ENCODE measurements at regions of chr2 and their contacts with region 1.

Region 1: DNA sequence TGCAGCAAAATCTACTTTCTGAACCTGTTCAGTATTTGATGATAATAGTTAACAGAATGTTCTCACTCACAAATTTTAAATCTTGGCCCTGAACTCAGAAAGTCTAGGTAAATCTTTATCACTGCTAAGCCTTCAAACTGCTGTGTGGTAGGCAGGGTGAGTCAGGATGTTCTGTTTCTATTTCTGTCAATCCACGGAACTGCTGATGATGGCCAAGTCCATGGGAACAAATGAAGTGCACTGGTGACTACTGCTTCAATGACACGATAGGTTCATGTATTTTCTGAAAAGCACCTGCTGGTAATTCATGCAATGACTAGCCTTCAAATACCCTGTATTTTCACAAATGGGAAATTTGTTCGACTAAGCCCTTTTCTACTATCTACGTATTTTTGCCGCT is 14.2 kb downstream of the NIFK start:
- DNase-seq: no peak
- ATAC-seq: peak in 5 of 8 donors; percentile 47 to 85 (median 72)
- H3K4me3 ChIP-seq: no peak overlapping the region
- H3K27ac ChIP-seq: no peak overlapping the region
- H3K4me1 ChIP-seq: peaks cover 0 to 20% (median 0%) of the 10 kb centered on the region in 9 donors
- H3K27me3 ChIP-seq: no peaks in the 10 kb centered on the region
- CTCF ChIP-seq: no peak

Region 2: DNA sequence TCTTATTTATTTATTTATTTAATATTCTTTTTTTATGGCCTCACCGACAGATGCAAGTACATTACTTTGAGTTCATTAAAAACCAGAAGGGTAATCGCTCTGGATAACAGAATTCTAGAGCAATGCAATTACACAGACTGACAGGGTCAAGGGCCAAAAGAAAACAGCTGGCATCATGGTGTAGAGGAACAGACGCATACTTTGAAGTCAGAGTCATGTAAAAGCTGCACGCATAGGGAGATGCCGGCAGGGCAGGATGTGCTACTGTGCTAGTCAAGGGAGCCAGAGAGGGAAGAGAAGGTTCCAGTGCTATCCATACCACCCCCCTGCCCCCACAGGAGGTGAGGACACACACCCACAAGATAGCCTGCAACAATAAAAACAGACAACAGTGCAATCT is 322.3 kb before region 1 on chr2:
- intact Hi-C with region 1: loop called (anchors 2 to 10 kb)
- DNase-seq: no peak
- ATAC-seq: no peak
- H3K4me3 ChIP-seq: no peak overlapping the region
- H3K27ac ChIP-seq: no peak overlapping the region
- H3K4me1 ChIP-seq: no peaks in the 10 kb centered on the region
- H3K27me3 ChIP-seq: no peaks in the 10 kb centered on the region
- CTCF ChIP-seq: no peak

Region 3: GRCh38 chr2:121408641-121409040 is 313.8 kb before region 1 on chr2:
- intact Hi-C with region 1: loop called (anchors 2 to 10 kb)
- DNase-seq: no peak
- ATAC-seq: no peak
- H3K4me3 ChIP-seq: no peak overlapping the region
- H3K27ac ChIP-seq: no peak overlapping the region
- H3K4me1 ChIP-seq: no peaks in the 10 kb centered on the region
- H3K27me3 ChIP-seq: no peaks in the 10 kb centered on the region
- CTCF ChIP-seq: no peak

Region 4: GRCh38 chr2:121596221-121597080 is 126.0 kb before region 1 on chr2:
- intact Hi-C with region 1: loop called in 4 of 10 experiments (anchors 5 to 10 kb)
- DNase-seq: peak in 1 of 2 donors; percentile 47
- ATAC-seq: peak; percentile 49 to 81 (median 76)
- H3K4me3 ChIP-seq: peak overlapping the region in 6 of 10 donors; percentile 5 to 38 (median 16)
- H3K27ac ChIP-seq: peak overlapping the region; percentile 2 to 85 (median 62)
- H3K4me1 ChIP-seq: peaks cover 2 to 55% (median 37%) of the 10 kb centered on the region in 9 donors
- H3K27me3 ChIP-seq: no peaks in the 10 kb centered on the region
- CTCF ChIP-seq: peak; percentile 22 to 76 (median 54)

Region 5: DNA sequence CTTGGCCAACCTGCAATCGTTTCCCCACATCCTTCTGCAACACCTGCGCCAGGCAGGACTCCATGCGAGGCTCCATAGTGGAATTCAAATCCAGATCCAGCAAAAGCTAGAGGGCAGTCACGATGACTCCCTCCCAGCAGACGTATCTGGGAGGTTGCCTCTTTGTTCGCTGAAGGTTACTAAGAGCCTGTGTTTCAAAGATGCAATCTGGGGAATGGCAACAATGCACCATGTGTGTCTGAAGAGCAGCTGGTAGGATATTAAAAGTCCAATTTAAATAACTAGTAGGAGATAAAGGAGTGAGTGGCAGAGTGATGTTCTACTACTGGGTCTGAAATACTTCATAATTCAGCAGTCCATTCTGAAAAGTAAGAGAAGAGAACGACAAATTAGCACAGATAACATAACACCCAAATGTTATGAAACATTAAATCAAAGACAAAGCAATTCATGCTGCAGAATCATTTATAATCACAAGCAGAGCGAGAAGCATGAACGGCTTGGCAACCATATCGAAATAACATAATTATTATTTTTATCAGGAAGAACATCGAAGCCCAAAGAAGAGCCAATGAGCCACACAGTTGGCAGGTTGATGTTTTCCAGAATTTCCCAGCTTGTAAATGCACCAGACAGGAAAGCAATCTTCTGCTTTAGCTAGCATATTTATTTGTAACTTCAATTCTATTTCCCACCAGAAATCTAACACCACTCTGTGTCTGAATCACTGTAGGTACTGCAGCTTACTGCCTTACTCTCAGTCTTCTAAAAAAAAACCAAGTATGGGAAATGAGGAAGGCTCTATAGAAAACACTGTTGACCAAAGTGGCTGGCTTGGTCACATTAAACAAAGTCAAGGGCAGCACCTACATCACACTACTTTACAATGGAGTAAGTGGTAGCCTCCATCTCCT is 116.4 kb before region 1 on chr2:
- intact Hi-C with region 1: loop called in 1 of 10 experiments (anchors 5 kb)
- DNase-seq: no peak
- ATAC-seq: peak in 7 of 8 donors; percentile 23 to 82 (median 48)
- H3K4me3 ChIP-seq: no peak overlapping the region
- H3K27ac ChIP-seq: peak overlapping the region in 8 of 10 donors; percentile 26 to 77 (median 44)
- H3K4me1 ChIP-seq: peaks cover 9 to 71% (median 30%) of the 10 kb centered on the region in 9 donors
- H3K27me3 ChIP-seq: no peaks in the 10 kb centered on the region
- CTCF ChIP-seq: peak in 2 of 9 donors; percentile 15 to 29

Region 6: GRCh38 chr2:121649596-121650314 is 72.7 kb before region 1 on chr2:
- intact Hi-C with region 1: loop called in 1 of 10 experiments (anchors 1 kb)
- DNase-seq: peak; percentile 95 to 97
- ATAC-seq: peak; percentile 98 to 99 (median 98)
- H3K4me3 ChIP-seq: peak overlapping the region; percentile 62 to 96 (median 90)
- H3K27ac ChIP-seq: peak overlapping the region; percentile 86 to 100 (median 96)
- H3K4me1 ChIP-seq: peaks cover 8 to 68% (median 55%) of the 10 kb centered on the region in 9 donors
- H3K27me3 ChIP-seq: no peaks in the 10 kb centered on the region
- CTCF ChIP-seq: no peak

Region 7: GRCh38 chr2:121664086-121664485 is 58.4 kb before region 1 on chr2:
- intact Hi-C with region 1: loop called in 1 of 10 experiments (anchors 5 kb)
- DNase-seq: no peak
- ATAC-seq: no peak
- H3K4me3 ChIP-seq: no peak overlapping the region
- H3K27ac ChIP-seq: peak overlapping the region in 3 of 10 donors; percentile 5 to 64 (median 49)
- H3K4me1 ChIP-seq: peaks cover 0 to 33% (median 17%) of the 10 kb centered on the region in 9 donors
- H3K27me3 ChIP-seq: no peaks in the 10 kb centered on the region
- CTCF ChIP-seq: no peak

Measured in heart right ventricle (tissue), 16 donors.